Spleen (tissue), 13 donors: ENCODE measurements at regions of chr3 and their contacts with region 1.

Region 1: DNA sequence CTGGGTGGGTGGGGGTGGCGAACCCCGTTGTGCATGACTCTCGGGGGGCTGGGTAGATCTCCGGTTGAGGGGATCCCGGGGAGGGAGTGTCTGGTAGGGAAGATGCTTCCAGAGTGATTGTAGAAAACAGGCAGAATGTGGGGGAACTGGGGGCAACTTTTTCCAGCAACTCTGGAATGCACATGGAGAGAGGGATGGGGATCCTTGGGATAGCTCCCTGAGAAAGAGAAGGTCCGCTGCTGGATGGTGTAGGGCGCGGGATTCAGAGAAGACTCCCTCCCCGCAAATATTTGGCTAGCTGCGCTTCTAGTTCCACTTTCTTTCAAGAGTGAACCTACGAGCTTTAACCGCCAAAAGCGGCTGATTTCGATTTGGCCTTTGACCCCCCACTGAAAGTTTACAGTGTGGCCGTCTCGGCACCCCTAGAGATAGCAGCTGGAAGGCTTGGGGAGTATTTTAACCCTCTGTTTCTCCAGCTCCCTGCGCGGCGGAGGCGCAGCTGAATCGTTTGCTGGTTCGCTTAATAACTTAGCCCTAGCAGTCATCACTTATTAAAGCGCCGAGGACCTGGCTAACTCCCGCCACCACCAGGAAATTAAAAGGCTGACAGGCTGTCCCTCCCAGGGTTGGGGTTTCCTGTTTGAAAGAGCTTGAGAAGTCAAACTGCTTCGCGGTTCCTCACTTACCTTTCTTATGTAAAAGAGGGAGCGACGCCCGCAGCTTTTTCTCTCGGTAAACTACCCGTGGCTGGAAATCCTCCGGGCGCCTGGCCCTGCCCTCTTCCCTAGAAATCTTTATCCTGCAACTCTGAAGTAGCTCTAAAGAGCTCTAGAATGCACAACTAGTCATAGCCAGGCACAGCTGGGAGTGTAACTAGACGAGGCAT is 1.2 kb downstream of the PHLDB2 start:
- DNase-seq: peak; percentile 87
- H3K4me3 ChIP-seq: peak overlapping the region; percentile 59 to 87 (median 67)
- H3K27ac ChIP-seq: peak overlapping the region; percentile 82 to 94 (median 92)
- H3K4me1 ChIP-seq: peaks cover 4 to 68% (median 38%) of the 10 kb centered on the region in 6 donors
- H3K27me3 ChIP-seq: peaks cover 0 to 23% (median 0%) of the 10 kb centered on the region in 7 donors
- CTCF ChIP-seq: peak in 10 of 11 experiments; percentile 20 to 69 (median 52)
- POLR2A ChIP-seq: peak in 1 of 3 donors; percentile 69

Region 2: GRCh38 chr3:111717601-111718000 is 142.6 kb before region 1 on chr3:
- intact Hi-C with region 1: loop called (anchors 10 kb)
- DNase-seq: peak; percentile 85
- H3K4me3 ChIP-seq: no peak overlapping the region
- H3K27ac ChIP-seq: peak overlapping the region in 3 of 8 donors; percentile 33 to 39 (median 38)
- H3K4me1 ChIP-seq: peaks cover 4 to 17% (median 7%) of the 10 kb centered on the region in 6 donors
- H3K27me3 ChIP-seq: no peaks in the 10 kb centered on the region
- CTCF ChIP-seq: peak; percentile 82 to 94 (median 92)
- POLR2A ChIP-seq: no peak

Region 3: GRCh38 chr3:111831840-111832239 is 28.4 kb before region 1 on chr3:
- intact Hi-C with region 1: no loop called
- DNase-seq: no peak
- H3K4me3 ChIP-seq: no peak overlapping the region
- H3K27ac ChIP-seq: no peak overlapping the region
- H3K4me1 ChIP-seq: no peaks in the 10 kb centered on the region
- H3K27me3 ChIP-seq: no peaks in the 10 kb centered on the region
- CTCF ChIP-seq: no peak
- POLR2A ChIP-seq: no peak